Activated T-helper 2 cell treated with anti-CD3 and anti-CD28 coated beads, Interferon-gamma antibody, Interleukin-2, Interleukin-4, amounts not matched to agents 10 μg/mL and 5 μg/mL and 100 μg/mL, durations not matched to agents 14 hours and 24 hours and 36 hours (primary cell): ENCODE measurements at regions of chrX and their contacts with region 1.

Region 1: DNA sequence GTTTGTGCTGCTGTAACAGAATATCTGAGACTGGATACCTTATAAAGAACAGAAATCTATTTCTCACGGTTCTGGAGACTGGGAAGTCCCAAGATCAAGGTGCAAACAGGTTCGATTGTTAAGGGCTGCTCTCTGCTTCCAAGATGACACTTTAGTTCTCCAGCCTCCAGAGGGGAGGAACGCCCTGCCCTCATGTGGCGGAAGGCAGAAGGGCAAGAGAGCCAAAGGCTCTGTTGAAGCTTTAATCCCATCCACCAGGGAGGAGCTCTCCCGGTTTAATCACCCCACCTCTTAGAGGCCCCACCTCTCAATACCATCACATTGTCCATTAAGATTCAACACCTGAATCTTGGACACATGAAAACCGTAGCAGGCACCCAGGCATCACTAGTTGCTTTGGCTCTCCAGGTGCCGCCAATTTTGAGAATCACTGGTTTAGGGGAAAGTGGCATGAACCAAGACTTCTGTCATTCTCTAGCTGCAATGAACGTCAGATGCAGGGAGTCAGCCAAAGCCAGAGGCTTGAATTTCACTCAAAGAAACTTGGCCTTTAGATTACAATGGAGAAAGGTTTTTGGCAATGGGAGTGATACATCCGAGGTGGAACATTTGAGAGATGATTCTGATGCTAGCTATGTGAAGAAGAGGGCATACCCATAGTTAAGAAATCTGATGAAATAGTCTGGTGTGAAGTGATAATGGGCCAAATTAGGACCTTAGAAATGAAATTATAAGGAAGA is 15.7 kb downstream of the FHL1 start:
- DNase-seq: peak; percentile 15
- H3K4me3 Mint-ChIP-seq: no peak overlapping the region
- H3K27ac Mint-ChIP-seq: no peak overlapping the region
- H3K4me1 Mint-ChIP-seq: peaks cover 2% of the 10 kb centered on the region
- H3K27me3 Mint-ChIP-seq: no peaks in the 10 kb centered on the region

Region 2: GRCh38 chrX:136268051-136269048 is 105.3 kb after region 1 on chrX:
- intact Hi-C with region 1: loop called (anchors 10 kb)
- DNase-seq: peak; percentile 9
- H3K4me3 Mint-ChIP-seq: no peak overlapping the region
- H3K27ac Mint-ChIP-seq: no peak overlapping the region
- H3K4me1 Mint-ChIP-seq: peaks cover 3% of the 10 kb centered on the region
- H3K27me3 Mint-ChIP-seq: no peaks in the 10 kb centered on the region